Psoas muscle (tissue), 8 donors: ENCODE measurements at regions of chr1 and their contacts with region 1.

Region 1: GRCh38 chr1:111448918-111449702 is at the starts of genes ATP5PB and WDR77:
- DNase-seq: peak; percentile 93 to 97
- ATAC-seq: peak; percentile 96 to 99 (median 98)
- H3K4me3 ChIP-seq: peak within 1 kb of the TSS; percentile 86
- H3K27ac ChIP-seq: peak within 1 kb of the TSS; percentile 89
- H3K4me1 ChIP-seq: peaks cover 48% of the 10 kb centered on the region
- H3K27me3 ChIP-seq: no peaks in the 10 kb centered on the region
- CTCF ChIP-seq: peak; percentile 9
- total RNA-seq, gene ATP5PB: 272 to 484 (median 398) TPM
- total RNA-seq, gene WDR77: 35.3 to 48.2 (median 42.9) TPM

Region 2: DNA sequence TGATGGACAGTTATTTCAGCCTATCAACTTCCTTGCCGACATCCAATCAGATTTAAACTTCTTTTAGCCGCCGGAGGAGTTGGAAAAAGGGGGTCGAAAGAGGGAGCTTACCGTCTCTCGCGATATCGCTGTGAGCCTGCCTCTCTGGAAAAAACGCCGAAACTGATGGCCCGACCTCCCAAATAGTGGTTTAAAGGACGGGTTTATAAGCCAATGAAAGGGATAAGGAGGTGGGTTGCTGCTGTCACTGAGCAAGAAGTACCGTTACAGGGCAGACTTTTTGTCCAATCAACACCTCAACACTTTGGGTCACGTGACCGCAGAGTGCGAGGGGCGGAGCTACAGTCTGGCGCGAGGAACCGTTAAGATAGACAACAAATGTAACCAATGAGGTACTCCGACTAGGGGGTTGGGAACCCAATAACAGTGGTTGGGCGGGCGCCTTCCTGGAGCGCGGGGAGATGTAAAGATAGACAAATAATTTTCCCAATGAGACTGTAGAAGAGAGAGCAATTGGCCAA is 1110.2 kb before region 1 on chr1 and contains the start of gene RBM15:
- intact Hi-C with region 1: loop called in 1 of 2 experiments (anchors 10 kb)
- DNase-seq: peak; percentile 98 to 99
- ATAC-seq: peak; percentile 79 to 86 (median 84)
- H3K4me3 ChIP-seq: peak within 1 kb of the TSS; percentile 93
- H3K27ac ChIP-seq: peak within 1 kb of the TSS; percentile 97
- H3K4me1 ChIP-seq: peaks cover 44% of the 10 kb centered on the region
- H3K27me3 ChIP-seq: no peaks in the 10 kb centered on the region
- CTCF ChIP-seq: no peak
- total RNA-seq, gene RBM15: 18.9 to 32.0 (median 25.0) TPM

Region 3: GRCh38 chr1:111139956-111140679 is 309.0 kb before region 1 on chr1 and contains the starts of genes CEPT1 and DRAM2:
- intact Hi-C with region 1: loop called (anchors 5 to 10 kb)
- DNase-seq: peak; percentile 96
- ATAC-seq: peak; percentile 96 to 97 (median 97)
- H3K4me3 ChIP-seq: peak within 1 kb of the TSS; percentile 96
- H3K27ac ChIP-seq: peak within 1 kb of the TSS; percentile 93
- H3K4me1 ChIP-seq: peaks cover 36% of the 10 kb centered on the region
- H3K27me3 ChIP-seq: no peaks in the 10 kb centered on the region
- CTCF ChIP-seq: peak; percentile 3
- total RNA-seq, gene CEPT1: 9.2 to 11.2 (median 10.1) TPM
- total RNA-seq, gene DRAM2: 19.2 to 28.0 (median 24.2) TPM

Region 4: GRCh38 chr1:111619635-111620440 is 170.7 kb after region 1 on chr1 and contains the start of gene RAP1A:
- intact Hi-C with region 1: no loop called
- DNase-seq: peak; percentile 96 to 98
- ATAC-seq: peak; percentile 96 to 98 (median 97)
- H3K4me3 ChIP-seq: peak within 1 kb of the TSS; percentile 91
- H3K27ac ChIP-seq: peak within 1 kb of the TSS; percentile 97
- H3K4me1 ChIP-seq: peaks cover 44% of the 10 kb centered on the region
- H3K27me3 ChIP-seq: no peaks in the 10 kb centered on the region
- CTCF ChIP-seq: no peak
- total RNA-seq, gene RAP1A: 63.6 to 94.8 (median 73.8) TPM

Region 5: DNA sequence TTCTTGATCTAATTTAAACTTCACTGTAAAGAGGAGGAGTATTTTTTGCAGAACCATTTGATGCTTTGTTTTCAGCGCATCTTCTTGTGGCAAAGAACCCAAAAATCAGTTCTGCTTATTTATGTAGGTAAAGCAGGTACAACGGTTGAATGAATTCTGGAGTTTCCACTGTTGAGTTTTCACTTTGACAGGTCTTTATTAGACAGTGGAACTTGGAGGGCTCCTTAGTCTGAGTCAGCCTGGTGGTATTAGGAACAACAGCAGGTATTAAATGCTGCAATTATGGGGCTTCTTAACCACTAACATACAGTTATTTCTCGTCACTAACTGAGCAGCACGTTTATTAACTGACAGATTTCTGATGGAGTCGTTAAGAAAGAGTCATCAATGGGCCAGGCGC is 1625.1 kb after region 1 on chr1:
- intact Hi-C with region 1: no loop called
- DNase-seq: no peak
- ATAC-seq: no peak
- H3K4me3 ChIP-seq: peak overlapping the region; percentile 98
- H3K27ac ChIP-seq: peak overlapping the region; percentile 92
- H3K4me1 ChIP-seq: peaks cover 24% of the 10 kb centered on the region
- H3K27me3 ChIP-seq: no peaks in the 10 kb centered on the region
- CTCF ChIP-seq: no peak